ENCODE measurements at regions of chr1 and their contacts with region 1.

Region 1: DNA sequence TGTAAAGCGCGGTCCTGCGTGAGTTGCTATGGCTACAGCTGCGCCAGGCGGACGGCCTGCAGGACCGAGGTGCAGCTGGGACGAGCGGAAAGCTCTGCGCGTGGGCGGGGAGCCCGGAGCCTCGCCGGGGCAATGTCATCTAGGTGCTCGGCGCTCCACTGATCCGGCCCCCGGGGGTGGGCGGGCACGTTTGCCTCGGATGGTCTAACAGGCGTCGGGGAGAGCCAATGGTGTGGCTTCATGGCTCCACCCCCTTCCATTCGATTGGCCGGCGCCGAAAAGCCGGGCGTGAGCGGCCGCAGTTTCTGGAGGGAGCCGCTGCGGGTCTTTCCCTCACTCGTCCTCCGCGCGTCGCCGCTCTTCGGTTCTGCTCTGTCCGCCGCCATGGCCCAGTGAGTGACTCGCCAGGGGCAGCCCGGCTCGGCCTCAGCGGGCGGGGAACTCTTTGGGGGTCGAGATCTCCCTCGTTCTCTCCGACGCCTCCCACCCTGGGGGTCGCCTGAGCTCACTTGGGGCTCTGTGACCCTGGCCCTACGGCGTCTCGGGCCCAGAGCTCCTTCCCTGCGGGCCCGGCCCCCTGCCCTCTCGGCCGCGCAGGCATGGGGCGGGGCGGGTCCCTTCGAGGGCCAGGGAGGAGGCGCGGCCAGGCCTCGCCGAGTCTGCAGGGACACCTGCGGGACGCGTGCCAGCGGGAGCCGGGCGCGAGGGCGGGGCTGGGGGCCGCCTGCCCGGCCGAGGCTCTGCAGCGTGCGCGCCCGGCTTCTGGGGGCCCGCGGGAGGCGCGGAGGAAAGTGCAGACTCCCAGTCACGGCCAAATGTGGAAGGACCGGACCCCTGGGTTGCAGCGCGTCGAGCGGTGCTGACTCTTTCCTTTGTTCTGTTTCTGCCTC is at the start of gene PGD:
- DNase-seq: peak; percentile 78
- ATAC-seq: peak; percentile 99
- H3K4me3 ChIP-seq: peak within 1 kb of the TSS; percentile 68 to 83
- H3K27ac ChIP-seq: peak within 1 kb of the TSS; percentile 74
- H3K4me1 ChIP-seq: 0 out of 2 replicates have a peak, but pooled peaks cover 5% of the 10 kb centered on the region
- H3K27me3 ChIP-seq: no peaks in the 10 kb centered on the region
- CTCF ChIP-seq: no peak
- total RNA-seq, gene PGD: 158 TPM

Region 2: GRCh38 chr1:10257851-10258250 is 141.1 kb before region 1 on chr1:
- CTCF ChIA-PET with region 1: no interaction called
- POLR2A ChIA-PET with region 1: no interaction called
- in situ Hi-C with region 1: no loop called
- intact Hi-C with region 1: no loop called
- DNase-seq: no peak
- ATAC-seq: no peak
- H3K4me3 ChIP-seq: no peak overlapping the region
- H3K27ac ChIP-seq: no peak overlapping the region
- H3K4me1 ChIP-seq: no peaks in the 10 kb centered on the region
- H3K27me3 ChIP-seq: no peaks in the 10 kb centered on the region
- CTCF ChIP-seq: no peak

Region 3: DNA sequence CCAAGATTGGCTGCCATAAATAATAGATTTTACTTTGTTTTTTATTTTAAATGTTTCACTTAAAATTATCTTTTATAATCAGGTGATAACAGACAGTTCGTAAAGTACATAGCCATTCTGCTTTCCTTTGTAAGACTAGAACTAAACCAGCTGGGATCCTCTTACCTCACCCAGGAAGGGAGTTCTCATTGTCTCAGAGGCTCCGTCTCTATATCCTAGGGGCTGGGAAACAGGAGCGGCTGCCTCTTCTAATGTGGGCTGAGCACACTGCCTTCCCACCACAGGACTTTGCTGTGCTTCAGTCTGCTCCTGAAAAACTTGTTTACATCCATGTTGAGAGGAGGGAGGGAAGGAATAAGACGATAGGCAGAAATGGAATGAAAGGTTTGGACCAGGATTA is 45.7 kb before region 1 on chr1:
- CTCF ChIA-PET with region 1: no interaction called
- POLR2A ChIA-PET with region 1: no interaction called
- in situ Hi-C with region 1: no loop called
- intact Hi-C with region 1: no loop called
- DNase-seq: no peak
- ATAC-seq: no peak
- H3K4me3 ChIP-seq: no peak overlapping the region
- H3K27ac ChIP-seq: no peak overlapping the region
- H3K4me1 ChIP-seq: no peaks in the 10 kb centered on the region
- H3K27me3 ChIP-seq: no peaks in the 10 kb centered on the region
- CTCF ChIP-seq: no peak

Region 4: DNA sequence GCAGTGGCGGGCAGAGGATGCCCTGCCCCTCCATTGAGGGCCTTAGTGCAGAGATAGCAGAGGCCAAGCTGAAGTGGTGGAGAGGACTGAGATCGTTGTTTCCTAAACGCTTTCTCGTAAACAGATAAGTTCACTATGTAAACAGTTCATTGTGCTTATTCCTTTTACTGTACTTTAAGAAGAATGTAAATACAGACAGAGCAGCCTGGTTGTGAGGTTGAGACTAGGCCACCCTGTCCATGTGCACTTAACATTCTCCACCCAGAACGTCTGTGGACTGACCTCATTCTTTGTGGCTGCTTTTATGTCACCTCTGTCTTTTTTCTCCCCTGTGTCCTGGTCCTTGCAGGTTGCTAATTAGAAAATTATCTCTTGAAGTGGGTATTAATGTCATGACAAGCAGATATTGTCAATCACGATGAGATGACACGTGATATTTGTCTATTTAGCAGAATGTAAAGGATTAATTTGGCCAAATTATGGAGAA is 39.7 kb after region 1 on chr1:
- CTCF ChIA-PET with region 1: no interaction called
- POLR2A ChIA-PET with region 1: interaction called, 12 read pairs
- in situ Hi-C with region 1: no loop called
- intact Hi-C with region 1: no loop called
- DNase-seq: no peak
- ATAC-seq: no peak
- H3K4me3 ChIP-seq: no peak overlapping the region
- H3K27ac ChIP-seq: no peak overlapping the region
- H3K4me1 ChIP-seq: 0 out of 2 replicates have a peak, but pooled peaks cover 3% of the 10 kb centered on the region
- H3K27me3 ChIP-seq: no peaks in the 10 kb centered on the region
- CTCF ChIP-seq: no peak

Measured in Panc1 (cell line).